ENCODE measurements at regions of chr11 and their contacts with region 1.

Region 1: GRCh38 chr11:4187055-4187988 is 92.7 kb downstream of the RRM1 start:
- DNase-seq: peak; percentile 75 to 98 (median 89)

Region 2: GRCh38 chr11:4203603-4204360 is 16.5 kb after region 1 on chr11:
- intact Hi-C with region 1: no loop called
- DNase-seq: no peak

Region 3: DNA sequence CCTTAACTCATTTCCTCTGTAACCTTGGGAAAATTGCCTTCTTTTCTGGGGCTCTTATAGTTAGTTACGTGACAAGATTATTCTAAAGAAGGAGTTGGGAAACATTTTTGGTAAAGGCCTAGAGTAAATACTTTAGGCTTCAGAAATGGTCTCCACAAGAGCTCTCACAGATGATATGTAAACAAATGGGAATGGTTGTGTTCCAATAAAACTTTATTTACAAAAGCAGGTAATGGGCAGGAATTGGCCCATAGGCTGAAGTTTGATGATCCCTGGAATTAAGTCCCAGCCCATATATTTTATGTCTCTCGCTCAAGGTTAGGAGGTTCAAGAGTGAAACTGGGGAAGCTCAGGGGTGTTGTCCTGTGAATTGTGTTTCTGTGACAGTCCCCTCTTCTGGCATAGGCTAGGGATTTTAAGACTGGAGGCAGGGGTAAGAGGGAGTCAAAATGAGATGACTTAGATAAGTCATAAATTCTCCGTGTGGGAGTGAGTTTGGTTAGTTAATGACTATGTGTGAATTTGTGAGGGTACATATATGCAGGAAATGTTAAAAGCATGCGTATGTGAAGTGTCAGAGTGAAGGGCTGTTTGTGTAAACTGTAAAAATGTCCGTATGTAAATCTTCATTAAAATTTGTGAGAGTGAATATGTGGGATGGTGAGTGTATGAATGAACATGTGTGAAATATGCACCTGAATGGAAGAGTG is 188.3 kb after region 1 on chr11:
- intact Hi-C with region 1: no loop called
- DNase-seq: no peak

Region 4: GRCh38 chr11:4493480-4493818 is 306.1 kb after region 1 on chr11:
- intact Hi-C with region 1: loop called (anchors 1 kb)
- DNase-seq: no peak

Region 5: DNA sequence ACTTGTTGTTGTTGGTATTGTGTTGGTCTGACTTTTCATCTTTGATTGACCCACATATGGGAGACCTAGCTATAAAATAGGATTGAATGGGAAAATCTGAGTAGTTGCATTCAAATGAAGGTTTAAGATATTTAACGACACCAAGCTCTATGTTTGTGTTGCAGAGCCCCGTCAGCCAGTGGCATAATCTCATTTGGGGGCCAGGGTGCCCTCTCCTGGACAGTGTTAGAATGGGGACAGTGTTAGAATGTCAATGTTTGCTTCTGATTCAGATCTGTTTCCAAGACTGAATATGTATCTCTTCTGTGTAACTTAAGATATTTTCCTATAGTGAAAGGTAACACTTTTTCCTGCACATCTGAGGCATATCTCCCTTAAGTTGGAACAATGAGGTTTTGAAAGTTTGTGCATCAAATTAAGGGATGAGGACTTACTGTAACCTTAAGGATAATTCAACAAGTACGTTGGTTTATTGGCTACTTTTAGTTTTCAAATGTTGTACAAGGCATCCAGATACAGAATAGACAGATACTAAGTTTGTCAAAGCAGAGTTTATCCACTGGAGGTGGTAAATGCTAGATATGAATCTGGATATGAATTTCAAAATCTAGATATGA is 352.4 kb after region 1 on chr11:
- intact Hi-C with region 1: loop called (anchors 2 kb)
- DNase-seq: peak in 7 of 10 donors; percentile 27 to 85 (median 51)

Region 6: GRCh38 chr11:5004424-5005274 is 817.3 kb after region 1 on chr11:
- intact Hi-C with region 1: loop called (anchors 2 kb)
- DNase-seq: peak in 9 of 10 donors; percentile 14 to 87 (median 58)

Measured in posterior cingulate gyrus (tissue), 11 donors.